ENCODE measurements at regions of chr13 and their contacts with region 1.

Region 1: DNA sequence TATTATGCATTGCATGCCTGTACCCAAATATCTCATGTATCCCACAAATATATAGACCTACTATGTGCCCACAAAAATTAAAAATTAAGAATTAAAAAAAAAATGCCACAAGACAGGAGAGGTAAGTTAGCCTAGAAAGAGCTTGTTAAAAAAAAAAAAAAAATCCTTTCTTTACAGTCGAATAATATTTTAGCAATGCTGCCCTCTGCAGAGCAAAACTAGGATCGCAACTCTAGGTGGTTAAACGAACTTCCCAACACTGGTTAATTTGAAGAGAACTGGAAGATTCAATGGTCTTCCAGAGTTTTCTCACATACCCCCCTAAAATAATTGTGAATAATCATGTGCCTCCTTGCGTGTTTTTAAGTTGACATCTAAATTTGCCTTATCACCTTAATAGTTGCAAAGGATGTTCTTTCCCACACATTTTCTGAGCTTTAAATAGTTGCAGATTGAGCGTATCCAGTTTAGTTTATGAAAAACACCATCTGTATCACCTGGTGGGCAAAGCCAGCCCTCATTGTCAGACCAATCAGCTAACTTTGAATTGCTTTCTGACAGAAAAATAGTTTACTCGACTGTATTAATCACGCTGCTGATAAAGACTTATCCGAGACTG is 47.4 kb upstream of the RCBTB2 start:
- DNase-seq: peak in 1 of 2 experiments; percentile 55
- H3K4me3 ChIP-seq: no peak overlapping the region
- H3K27ac ChIP-seq: no peak overlapping the region
- H3K4me1 ChIP-seq: no peaks in the 10 kb centered on the region
- H3K27me3 ChIP-seq: peaks cover 8% of the 10 kb centered on the region; the same call in 1 of the 2 replicates
- CTCF ChIP-seq: peak; percentile 84

Region 2: GRCh38 chr13:48126944-48127830 is 453.1 kb before region 1 on chr13:
- CTCF ChIA-PET with region 1: interaction called, 5 read pairs
- POLR2A ChIA-PET with region 1: no interaction called
- intact Hi-C with region 1: loop called (anchors 1 kb)
- DNase-seq: peak; percentile 21 to 52
- H3K4me3 ChIP-seq: no peak overlapping the region
- H3K27ac ChIP-seq: no peak overlapping the region
- H3K4me1 ChIP-seq: no peaks in the 10 kb centered on the region
- H3K27me3 ChIP-seq: no peaks in the 10 kb centered on the region
- CTCF ChIP-seq: peak; percentile 77

Region 3: GRCh38 chr13:48334534-48335127 is 245.7 kb before region 1 on chr13:
- CTCF ChIA-PET with region 1: interaction called, 25 read pairs
- POLR2A ChIA-PET with region 1: interaction called, 3 read pairs
- intact Hi-C with region 1: loop called (anchors 1 kb)
- DNase-seq: no peak
- H3K4me3 ChIP-seq: no peak overlapping the region
- H3K27ac ChIP-seq: no peak overlapping the region
- H3K4me1 ChIP-seq: 0 out of 2 replicates have a peak, but pooled peaks cover 6% of the 10 kb centered on the region
- H3K27me3 ChIP-seq: no peaks in the 10 kb centered on the region
- CTCF ChIP-seq: peak; percentile 77

Region 4: GRCh38 chr13:48400850-48401291 is 179.4 kb before region 1 on chr13:
- CTCF ChIA-PET with region 1: interaction called, 11 read pairs
- POLR2A ChIA-PET with region 1: no interaction called
- intact Hi-C with region 1: no loop called
- DNase-seq: peak in 1 of 2 experiments; percentile 40
- H3K4me3 ChIP-seq: no peak overlapping the region
- H3K27ac ChIP-seq: peak overlapping the region; percentile 33
- H3K4me1 ChIP-seq: peaks cover 15% of the 10 kb centered on the region; the same call in 1 of the 2 replicates
- H3K27me3 ChIP-seq: no peaks in the 10 kb centered on the region
- CTCF ChIP-seq: no peak

Region 5: DNA sequence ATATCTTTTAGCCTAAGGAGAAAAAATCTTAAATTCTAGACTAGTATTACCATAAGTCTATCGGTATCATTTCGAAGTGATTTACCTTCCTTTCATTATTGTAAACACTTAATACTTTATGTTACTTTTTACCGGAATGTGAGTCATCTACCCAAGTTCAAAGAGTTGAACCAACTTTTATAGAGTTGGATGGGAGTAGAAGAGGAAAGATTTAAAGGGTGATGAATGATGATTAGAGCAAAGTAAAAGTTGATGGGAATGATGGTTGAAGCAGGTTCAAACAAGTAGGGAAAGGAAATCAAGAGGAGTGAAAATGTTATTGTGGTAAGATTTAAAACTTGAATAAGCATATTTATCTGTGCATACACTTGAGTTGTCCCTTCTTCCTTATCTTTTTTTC is 156.1 kb before region 1 on chr13:
- CTCF ChIA-PET with region 1: no interaction called
- POLR2A ChIA-PET with region 1: no interaction called
- intact Hi-C with region 1: no loop called
- DNase-seq: no peak
- H3K4me3 ChIP-seq: no peak overlapping the region
- H3K27ac ChIP-seq: no peak overlapping the region
- H3K4me1 ChIP-seq: no peaks in the 10 kb centered on the region
- H3K27me3 ChIP-seq: no peaks in the 10 kb centered on the region
- CTCF ChIP-seq: no peak